HCT116 (cell line): ENCODE measurements at regions of chr1 and their contacts with region 1.

Region 1: GRCh38 chr1:63691701-63692425 is 82.0 kb upstream of the ROR1 start:
- DNase-seq: peak; percentile 78
- ATAC-seq: peak; percentile 95
- H3K4me3 ChIP-seq: no peak overlapping the region
- H3K27ac ChIP-seq: no peak overlapping the region
- H3K4me1 ChIP-seq: peaks cover 0 to 6% of the 10 kb centered on the region in 2 experiments; a peak in 1 of 4 replicates
- H3K27me3 ChIP-seq: no peaks in the 10 kb centered on the region
- CTCF ChIP-seq: peak; percentile 80 to 84 (median 82)
- POLR2A ChIP-seq: no peak
- RAD21 ChIP-seq: peak; percentile 92

Region 2: DNA sequence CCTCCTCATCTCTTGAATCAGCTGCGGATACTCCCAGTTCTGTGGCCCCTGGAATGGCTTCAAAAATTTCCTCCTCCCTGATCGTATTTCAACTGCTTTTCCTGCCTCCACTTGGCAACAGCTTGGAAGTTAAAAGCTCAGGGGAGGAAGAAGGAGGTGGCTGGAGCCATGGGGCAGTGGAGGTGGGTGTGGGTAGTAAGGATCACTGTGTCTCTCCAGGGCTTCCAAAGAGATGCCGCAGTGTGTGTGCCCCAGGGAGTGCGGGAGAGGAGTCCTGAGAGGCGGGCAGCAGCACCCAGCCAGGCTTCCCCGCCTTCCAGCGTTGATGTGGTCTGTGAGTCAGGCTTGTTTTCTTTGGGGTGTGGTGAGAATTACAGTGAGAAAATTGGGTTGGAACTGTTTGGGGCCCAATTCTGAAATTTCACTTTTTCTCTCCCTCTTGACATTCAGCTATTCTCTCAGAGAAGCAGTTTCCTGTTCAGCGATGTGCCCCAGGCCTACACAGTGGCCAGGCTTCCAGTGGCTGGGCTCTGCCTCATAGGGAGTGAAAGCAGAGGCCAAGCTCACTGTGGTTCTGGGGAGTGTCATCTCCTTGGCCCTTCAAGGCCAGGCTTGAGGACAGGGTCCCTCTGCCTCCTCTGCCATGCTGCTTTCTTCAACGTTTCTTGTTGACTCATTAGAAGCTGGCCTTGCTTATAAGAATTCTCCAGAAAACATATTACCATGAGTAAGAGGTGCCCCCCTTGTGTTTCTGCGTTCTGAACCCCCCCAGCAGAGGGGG is 29.6 kb before region 1 on chr1:
- CTCF ChIA-PET with region 1: interaction called, 15 read pairs
- POLR2A ChIA-PET with region 1: interaction called, 12 read pairs
- RAD21 ChIA-PET with region 1: interaction called in 1 of 2 experiments, 8 read pairs
- intact Hi-C with region 1: no loop called
- DNase-seq: peak; percentile 78
- ATAC-seq: peak; percentile 87
- H3K4me3 ChIP-seq: peak overlapping the region; percentile 2 to 41
- H3K27ac ChIP-seq: peak overlapping the region; percentile 91
- H3K4me1 ChIP-seq: peaks cover 34 to 58% of the 10 kb centered on the region in 2 experiments
- H3K27me3 ChIP-seq: no peaks in the 10 kb centered on the region
- CTCF ChIP-seq: no peak
- POLR2A ChIP-seq: no peak
- RAD21 ChIP-seq: peak; percentile 31; the same call in 1 of the 2 replicates

Region 3: GRCh38 chr1:63704443-63704842 is 12.6 kb after region 1 on chr1:
- CTCF ChIA-PET with region 1: interaction called, 10 read pairs
- POLR2A ChIA-PET with region 1: no interaction called
- RAD21 ChIA-PET with region 1: interaction called in 1 of 2 experiments, 3 read pairs
- intact Hi-C with region 1: no loop called
- DNase-seq: no peak
- ATAC-seq: peak; percentile 50; the same call in 1 of the 2 replicates
- H3K4me3 ChIP-seq: no peak overlapping the region
- H3K27ac ChIP-seq: no peak overlapping the region
- H3K4me1 ChIP-seq: peaks cover 0 to 6% of the 10 kb centered on the region in 2 experiments; a peak in 1 of 4 replicates
- H3K27me3 ChIP-seq: peaks cover 6% of the 10 kb centered on the region; the same call in 1 of the 2 replicates
- CTCF ChIP-seq: no peak
- POLR2A ChIP-seq: no peak
- RAD21 ChIP-seq: no peak

Region 4: DNA sequence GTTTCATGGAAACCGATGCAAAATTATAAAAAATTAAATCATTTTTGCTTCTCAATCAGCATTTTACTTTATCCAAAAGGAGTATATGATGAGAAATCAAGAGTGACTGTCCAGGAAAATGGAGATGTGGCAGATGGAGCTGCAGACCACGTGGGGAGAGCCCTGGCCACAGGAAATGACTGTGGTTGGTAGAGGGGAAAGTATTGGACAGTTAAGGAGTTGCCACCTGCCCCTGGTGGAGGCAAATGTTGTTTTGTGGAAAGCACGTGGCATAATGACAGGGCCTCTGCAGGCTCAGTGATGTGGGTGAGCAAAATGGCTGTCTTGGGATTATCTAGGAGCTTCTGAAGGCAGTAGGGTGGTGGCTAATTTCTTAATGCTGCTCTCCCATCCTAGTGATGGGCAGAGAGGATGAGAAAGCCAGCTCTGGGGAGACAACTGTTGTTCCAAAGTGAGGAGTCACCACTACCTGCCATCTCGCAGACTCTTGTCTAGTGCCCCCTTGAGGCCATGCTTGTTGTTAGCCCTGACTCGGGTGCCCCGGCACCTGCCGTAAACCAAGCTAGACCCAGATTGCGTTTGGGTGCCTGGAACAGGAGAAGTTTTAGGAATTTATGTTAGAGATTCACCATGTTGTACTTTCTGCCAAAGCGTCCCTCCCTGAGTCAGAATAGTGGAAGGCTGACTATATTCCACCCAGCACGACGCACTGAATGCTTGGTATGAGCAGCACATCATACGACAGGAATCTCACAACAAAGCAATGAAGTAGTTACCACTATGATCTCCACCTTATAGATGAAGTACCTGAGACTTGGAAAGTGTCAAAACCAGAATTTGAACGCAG is 225.9 kb after region 1 on chr1:
- CTCF ChIA-PET with region 1: interaction called, 50 read pairs
- POLR2A ChIA-PET with region 1: interaction called, 3 read pairs
- RAD21 ChIA-PET with region 1: interaction called, 5 to 12 read pairs
- intact Hi-C with region 1: loop called (anchors 5 kb)
- DNase-seq: peak; percentile 32
- ATAC-seq: peak; percentile 71
- H3K4me3 ChIP-seq: no peak overlapping the region
- H3K27ac ChIP-seq: no peak overlapping the region
- H3K4me1 ChIP-seq: peaks cover 0 to 15% of the 10 kb centered on the region in 2 experiments; a peak in 2 of 4 replicates
- H3K27me3 ChIP-seq: no peaks in the 10 kb centered on the region
- CTCF ChIP-seq: peak; percentile 32 to 72 (median 65); a peak in 5 of 6 replicates
- POLR2A ChIP-seq: no peak
- RAD21 ChIP-seq: peak; percentile 45; the same call in 1 of the 2 replicates

Region 5: DNA sequence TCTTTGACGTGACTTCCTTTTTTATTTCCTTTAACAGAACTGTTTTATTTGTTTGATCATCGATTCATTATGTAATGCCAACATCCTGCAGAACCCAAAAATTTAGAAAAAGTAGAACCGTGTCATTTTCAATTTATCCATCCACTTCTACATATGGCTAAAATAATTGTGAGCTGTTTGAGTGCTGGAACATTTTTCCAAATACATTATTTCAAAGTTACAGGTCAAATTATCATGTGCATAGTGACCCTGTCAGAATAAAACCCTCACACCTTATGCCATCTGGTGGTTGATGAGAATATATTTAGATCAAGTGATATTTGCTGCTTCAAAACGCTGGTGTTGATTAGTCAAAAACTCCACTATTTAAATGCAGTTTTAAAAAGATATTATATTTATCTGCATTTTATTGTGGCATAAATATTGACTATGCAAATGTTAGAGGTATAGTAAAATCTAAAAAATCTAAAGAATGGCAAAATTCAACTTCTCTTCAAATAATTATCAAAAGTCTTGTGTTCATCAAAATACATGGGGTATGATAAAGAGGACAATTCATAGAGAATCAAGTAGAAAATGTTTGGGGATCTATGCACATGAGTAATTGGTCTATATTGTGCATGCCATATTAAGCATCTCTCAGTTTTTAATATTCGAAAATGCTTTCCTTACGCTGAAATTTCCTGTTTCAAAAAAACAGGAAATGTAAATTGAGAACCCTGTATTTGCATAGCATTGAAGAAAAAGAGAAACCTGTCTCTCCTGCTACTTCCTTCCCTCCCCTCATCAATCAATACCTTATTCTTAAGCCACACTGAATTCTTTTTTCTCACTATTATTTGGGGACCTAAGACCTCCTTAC is 551.3 kb after region 1 on chr1:
- CTCF ChIA-PET with region 1: interaction called, 104 read pairs
- POLR2A ChIA-PET with region 1: no interaction called
- RAD21 ChIA-PET with region 1: interaction called, 5 to 6 read pairs
- intact Hi-C with region 1: loop called (anchors 1 kb)
- DNase-seq: peak; percentile 40
- ATAC-seq: peak; percentile 74
- H3K4me3 ChIP-seq: no peak overlapping the region
- H3K27ac ChIP-seq: no peak overlapping the region
- H3K4me1 ChIP-seq: no peaks in the 10 kb centered on the region
- H3K27me3 ChIP-seq: no peaks in the 10 kb centered on the region
- CTCF ChIP-seq: peak; percentile 48 to 77 (median 63)
- POLR2A ChIP-seq: no peak
- RAD21 ChIP-seq: peak; percentile 82